K562 (cell line): ENCODE measurements at regions of chr17 and their contacts with region 1.

Region 1: GRCh38 chr17:43367737-43368242 is 31.0 kb upstream of the ARL4D start:
- DNase-seq: peak in 2 of 4 experiments; percentile 27 to 48
- ATAC-seq: peak; percentile 85
- H3K4me3 ChIP-seq: no peak overlapping the region
- H3K27ac ChIP-seq: peak overlapping the region; percentile 88
- H3K4me1 ChIP-seq: peaks cover 11 to 20% of the 10 kb centered on the region in 2 experiments
- H3K27me3 ChIP-seq: no peaks in the 10 kb centered on the region
- CTCF ChIP-seq: no peak
- EP300 ChIP-seq: no peak
- POLR2A ChIP-seq: peak; percentile 100
- RAD21 ChIP-seq: no peak

Region 2: GRCh38 chr17:43151880-43152456 is 215.8 kb before region 1 on chr17:
- CTCF ChIA-PET with region 1: no interaction called
- POLR2A ChIA-PET with region 1: no interaction called
- in situ Hi-C with region 1: no loop called
- intact Hi-C with region 1: no loop called
- DNase-seq: no peak
- ATAC-seq: no peak
- H3K4me3 ChIP-seq: no peak overlapping the region
- H3K27ac ChIP-seq: no peak overlapping the region
- H3K4me1 ChIP-seq: peaks cover 0 to 9% of the 10 kb centered on the region in 2 experiments; a peak in 3 of 5 replicates
- H3K27me3 ChIP-seq: no peaks in the 10 kb centered on the region
- CTCF ChIP-seq: no peak
- EP300 ChIP-seq: no peak
- POLR2A ChIP-seq: no peak
- RAD21 ChIP-seq: no peak

Region 3: DNA sequence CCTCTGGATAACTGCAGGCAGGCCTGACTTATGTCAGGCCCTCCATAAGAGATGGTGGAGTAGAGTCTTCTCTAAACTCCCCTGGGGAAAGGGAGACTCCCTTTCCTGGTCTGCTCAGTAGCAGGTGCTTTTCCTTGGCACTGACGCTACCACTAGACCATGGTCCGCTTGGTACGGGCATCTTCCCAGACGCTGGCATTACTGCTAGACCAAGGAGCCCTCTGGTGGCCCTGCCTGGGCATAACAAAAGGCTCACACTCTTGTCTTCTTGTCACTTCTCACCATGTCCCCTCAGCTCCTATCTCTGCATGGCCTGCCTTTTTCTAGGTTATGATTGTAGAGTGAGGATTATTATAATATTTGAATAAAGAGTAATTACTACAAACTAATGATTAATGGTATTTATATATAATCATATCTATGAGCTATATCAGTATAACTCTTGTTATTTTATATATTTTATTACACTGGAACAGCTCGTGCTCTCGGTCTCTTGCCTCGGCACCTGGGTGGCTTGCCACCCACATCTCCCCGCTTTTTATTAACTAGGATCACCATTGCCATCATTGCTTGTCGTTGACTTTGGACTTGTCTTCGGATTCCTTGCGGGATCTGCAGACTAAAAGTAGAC is 28.8 kb before region 1 on chr17:
- CTCF ChIA-PET with region 1: no interaction called
- POLR2A ChIA-PET with region 1: interaction called, 10 read pairs
- in situ Hi-C with region 1: no loop called
- intact Hi-C with region 1: no loop called
- DNase-seq: no peak
- ATAC-seq: no peak
- H3K4me3 ChIP-seq: no peak overlapping the region
- H3K27ac ChIP-seq: no peak overlapping the region
- H3K4me1 ChIP-seq: no peaks in the 10 kb centered on the region; a peak in 1 of 5 replicates
- H3K27me3 ChIP-seq: no peaks in the 10 kb centered on the region
- CTCF ChIP-seq: peak; percentile 32 to 62 (median 60); a peak in 5 of 6 replicates
- EP300 ChIP-seq: no peak
- POLR2A ChIP-seq: no peak
- RAD21 ChIP-seq: peak; percentile 34 to 57; a peak in 2 of 4 replicates

Region 4: DNA sequence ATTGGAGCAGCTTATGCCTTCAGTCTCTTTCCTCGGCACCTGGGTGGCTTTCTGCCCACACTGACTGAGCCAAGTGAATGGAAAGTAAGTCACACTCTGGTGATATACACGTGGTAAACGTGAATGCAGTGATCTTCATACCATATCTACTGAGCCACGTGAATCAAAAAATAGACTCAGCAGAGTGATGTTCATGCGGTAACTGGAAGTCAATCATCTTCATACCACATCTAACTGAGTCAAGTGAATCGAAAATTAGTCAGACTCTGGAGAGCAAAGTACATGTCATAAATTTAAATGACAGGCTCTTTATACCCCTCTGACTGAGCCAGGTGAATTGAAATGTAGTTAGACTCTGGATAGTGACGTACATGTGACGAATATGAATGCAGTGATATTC is 16.1 kb before region 1 on chr17:
- CTCF ChIA-PET with region 1: no interaction called
- POLR2A ChIA-PET with region 1: interaction called, 70 read pairs
- in situ Hi-C with region 1: no loop called
- intact Hi-C with region 1: no loop called
- DNase-seq: no peak
- ATAC-seq: no peak
- H3K4me3 ChIP-seq: no peak overlapping the region
- H3K27ac ChIP-seq: no peak overlapping the region; the same call in 2 of the 3 replicates
- H3K4me1 ChIP-seq: peaks cover 3 to 35% of the 10 kb centered on the region in 2 experiments; a peak in 4 of 5 replicates
- H3K27me3 ChIP-seq: peaks cover 0 to 3% of the 10 kb centered on the region in 2 experiments; a peak in 1 of 5 replicates
- CTCF ChIP-seq: no peak
- EP300 ChIP-seq: no peak
- POLR2A ChIP-seq: no peak
- RAD21 ChIP-seq: no peak

Region 5: GRCh38 chr17:43356999-43357398 is 10.8 kb before region 1 on chr17:
- CTCF ChIA-PET with region 1: no interaction called
- POLR2A ChIA-PET with region 1: interaction called, 70 read pairs
- in situ Hi-C with region 1: no loop called
- intact Hi-C with region 1: no loop called
- DNase-seq: no peak
- ATAC-seq: no peak
- H3K4me3 ChIP-seq: no peak overlapping the region
- H3K27ac ChIP-seq: no peak overlapping the region
- H3K4me1 ChIP-seq: peaks cover 0 to 22% of the 10 kb centered on the region in 2 experiments; a peak in 3 of 5 replicates
- H3K27me3 ChIP-seq: peaks cover 0 to 5% of the 10 kb centered on the region in 2 experiments; a peak in 1 of 5 replicates
- CTCF ChIP-seq: no peak
- EP300 ChIP-seq: no peak
- POLR2A ChIP-seq: no peak
- RAD21 ChIP-seq: no peak

Region 6: DNA sequence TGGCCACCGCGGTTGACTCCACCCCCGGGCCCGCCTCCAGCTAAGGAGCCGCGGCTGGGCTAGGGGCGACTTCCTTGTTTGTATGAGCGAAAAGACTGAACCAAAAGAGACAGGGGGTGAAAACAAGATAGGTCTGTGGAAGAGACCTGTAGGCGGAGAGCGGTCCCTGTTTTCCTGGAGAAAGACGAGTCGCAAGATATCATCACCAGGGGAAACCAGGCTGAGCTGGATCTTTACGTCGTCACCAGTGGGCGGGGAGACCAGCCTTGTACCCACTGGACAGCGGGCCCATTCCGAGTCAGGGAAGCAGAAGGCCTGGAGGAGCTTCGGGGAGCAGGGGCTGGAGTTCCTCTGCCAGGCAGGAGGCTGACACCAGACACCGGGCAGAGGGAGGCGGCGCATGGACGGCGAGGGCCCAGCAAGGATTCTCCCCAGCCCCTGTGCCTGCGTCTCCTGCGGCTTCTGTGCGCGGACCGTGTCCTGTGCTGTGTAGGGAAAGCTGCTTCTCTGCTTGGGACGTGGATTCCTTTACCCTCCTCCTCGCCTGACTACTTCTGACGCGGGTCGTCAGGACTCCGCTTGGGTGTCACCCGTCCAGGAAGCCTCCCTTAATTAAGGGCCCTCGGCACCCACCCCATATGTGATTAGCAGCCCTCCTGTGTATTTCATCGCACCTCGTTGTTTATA is 20.7 kb after region 1 on chr17:
- CTCF ChIA-PET with region 1: no interaction called
- POLR2A ChIA-PET with region 1: interaction called, 88 read pairs
- in situ Hi-C with region 1: no loop called
- intact Hi-C with region 1: no loop called
- DNase-seq: peak; percentile 77 to 89 (median 82)
- ATAC-seq: peak; percentile 94
- H3K4me3 ChIP-seq: peak overlapping the region; percentile 42
- H3K27ac ChIP-seq: peak overlapping the region; percentile 86
- H3K4me1 ChIP-seq: peaks cover 5 to 12% of the 10 kb centered on the region in 2 experiments; a peak in 2 of 5 replicates
- H3K27me3 ChIP-seq: no peaks in the 10 kb centered on the region
- CTCF ChIP-seq: no peak
- EP300 ChIP-seq: no peak
- POLR2A ChIP-seq: peak; percentile 81
- RAD21 ChIP-seq: no peak

Region 7: DNA sequence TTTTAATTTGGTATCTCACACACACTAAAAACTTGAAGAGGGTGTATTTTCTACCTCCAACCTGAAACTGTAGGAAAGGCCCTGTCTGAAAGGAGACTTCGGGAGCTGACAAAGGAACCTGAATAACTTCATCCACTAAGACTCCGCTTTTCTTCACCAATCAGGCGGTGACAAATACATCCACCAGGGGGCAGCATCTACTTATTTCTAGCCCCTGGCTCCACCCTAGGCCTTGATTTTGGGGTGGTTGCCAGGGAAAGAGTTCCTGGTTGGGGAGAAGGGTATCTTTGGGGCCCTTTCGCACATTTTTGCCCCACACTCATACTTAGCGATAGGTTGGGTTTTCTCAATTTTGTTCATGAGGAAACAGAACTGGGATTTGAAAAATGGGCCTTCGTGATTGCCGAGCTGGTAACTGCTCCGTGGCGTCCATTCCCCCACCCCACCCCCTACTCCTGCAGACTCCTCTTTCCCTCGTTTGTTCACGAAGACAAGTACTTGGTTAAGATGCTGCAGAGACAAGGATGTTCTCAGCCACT is 26.2 kb after region 1 on chr17:
- CTCF ChIA-PET with region 1: no interaction called
- POLR2A ChIA-PET with region 1: interaction called, 15 read pairs
- in situ Hi-C with region 1: no loop called
- intact Hi-C with region 1: no loop called
- DNase-seq: peak; percentile 83 to 87 (median 84)
- ATAC-seq: peak; percentile 81
- H3K4me3 ChIP-seq: no peak overlapping the region
- H3K27ac ChIP-seq: no peak overlapping the region
- H3K4me1 ChIP-seq: peaks cover 9 to 13% of the 10 kb centered on the region in 2 experiments; a peak in 4 of 5 replicates
- H3K27me3 ChIP-seq: no peaks in the 10 kb centered on the region
- CTCF ChIP-seq: peak; percentile 90 to 97 (median 93)
- EP300 ChIP-seq: peak; percentile 40; the same call in 1 of the 2 replicates
- POLR2A ChIP-seq: no peak
- RAD21 ChIP-seq: peak; percentile 97 to 98

Region 8: DNA sequence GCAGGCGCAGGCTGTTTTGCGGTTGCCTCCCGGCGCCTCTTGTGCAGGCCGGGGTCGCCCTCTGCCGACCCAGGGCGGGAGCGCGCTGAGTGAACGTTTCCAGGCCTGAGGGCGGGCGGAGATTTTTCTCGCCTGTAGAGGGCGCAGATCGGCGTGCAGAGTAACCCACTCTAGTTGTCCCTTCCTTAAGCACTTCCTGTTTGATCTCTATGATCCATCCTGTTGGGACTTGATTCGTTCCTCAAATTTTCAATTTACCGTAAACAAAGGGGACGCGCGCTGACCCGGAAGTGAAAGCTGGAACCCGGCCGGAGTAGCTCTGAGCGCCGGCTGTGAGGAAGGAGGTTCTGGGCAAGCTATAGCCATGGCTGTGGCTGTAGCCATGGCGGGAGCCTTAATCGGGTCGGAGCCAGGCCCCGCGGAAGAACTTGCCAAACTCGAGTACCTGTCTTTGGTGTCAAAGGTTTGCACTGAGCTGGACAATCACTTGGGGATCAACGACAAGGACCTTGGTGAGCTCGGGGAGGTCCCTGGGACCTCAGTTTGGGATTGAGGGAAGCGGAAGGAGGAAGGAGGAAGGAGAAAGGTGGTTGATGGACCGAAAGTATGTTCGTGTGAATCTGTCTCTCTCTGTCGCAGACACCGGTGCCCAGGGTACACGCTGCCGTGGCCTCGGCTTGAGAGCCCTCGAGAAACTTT is 116.0 kb after region 1 on chr17 and contains the start of gene DHX8:
- CTCF ChIA-PET with region 1: no interaction called
- POLR2A ChIA-PET with region 1: interaction called, 45 read pairs
- in situ Hi-C with region 1: no loop called
- intact Hi-C with region 1: no loop called
- DNase-seq: peak; percentile 91 to 97 (median 94)
- ATAC-seq: peak; percentile 98
- H3K4me3 ChIP-seq: peak within 1 kb of the TSS; percentile 62
- H3K27ac ChIP-seq: peak within 1 kb of the TSS; percentile 79
- H3K4me1 ChIP-seq: peaks cover 3 to 4% of the 10 kb centered on the region in 2 experiments; a peak in 3 of 5 replicates
- H3K27me3 ChIP-seq: no peaks in the 10 kb centered on the region
- CTCF ChIP-seq: peak; percentile 100
- EP300 ChIP-seq: peak; percentile 63
- POLR2A ChIP-seq: peak; percentile 95
- RAD21 ChIP-seq: peak; percentile 99 to 100
- polyA plus RNA-seq, gene DHX8: 23.1 to 24.5 TPM